ENCODE measurements at regions of chr19 and their contacts with region 1.

Region 1: DNA sequence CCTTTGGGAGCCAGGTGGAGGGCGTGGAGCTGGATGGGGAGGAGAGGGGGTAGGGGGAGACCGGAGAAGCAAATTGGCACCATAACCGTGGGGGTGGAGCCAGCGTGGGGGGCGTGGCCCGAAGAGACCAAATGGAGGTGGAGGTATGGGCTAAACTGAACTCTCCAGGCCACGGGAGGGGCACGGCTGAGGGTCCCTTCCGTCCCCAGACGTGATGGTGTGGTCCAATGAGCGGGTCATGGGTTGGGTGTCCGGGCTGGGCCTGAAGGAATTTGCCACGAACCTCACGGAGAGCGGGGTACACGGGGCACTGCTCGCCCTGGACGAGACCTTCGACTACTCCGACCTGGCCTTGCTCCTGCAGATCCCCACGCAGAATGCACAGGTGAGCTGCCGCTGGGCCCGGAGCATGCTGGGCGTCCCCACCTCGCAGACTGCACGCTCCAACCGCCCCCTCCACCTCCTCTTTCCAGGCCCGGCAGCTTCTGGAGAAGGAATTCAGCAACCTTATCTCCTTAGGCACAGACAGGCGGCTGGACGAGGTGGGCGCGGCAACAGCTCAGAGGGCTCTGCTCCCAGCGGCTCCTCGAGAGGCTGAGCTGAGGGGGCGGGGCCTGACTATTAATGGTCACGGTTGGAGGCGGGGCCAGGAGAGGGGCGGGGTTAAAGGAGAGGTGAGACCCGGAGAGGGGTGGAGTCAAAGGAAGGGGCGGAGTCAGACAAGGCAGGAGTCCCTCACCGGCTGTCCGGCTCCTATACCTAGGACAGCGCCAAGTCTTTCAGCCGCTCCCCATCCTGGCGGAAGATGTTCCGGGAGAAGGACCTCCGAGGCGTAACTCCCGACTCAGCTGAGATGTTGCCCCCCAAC is 6.2 kb downstream of the HRC start:
- DNase-seq: peak; percentile 49 to 64 (median 54)
- H3K4me3 ChIP-seq: peak overlapping the region in 2 of 3 experiments; percentile 59 to 79
- H3K4me3 Mint-ChIP-seq: peak overlapping the region; percentile 79 to 93
- H3K27ac ChIP-seq: no peak overlapping the region
- H3K27ac Mint-ChIP-seq: peak overlapping the region in 1 of 7 donors; percentile 63
- H3K4me1 ChIP-seq: peaks cover 39 to 53% of the 10 kb centered on the region in 2 donors
- H3K4me1 Mint-ChIP-seq: peaks cover 45% of the 10 kb centered on the region
- H3K27me3 ChIP-seq: peaks cover 13 to 54% of the 10 kb centered on the region in 2 donors
- H3K27me3 Mint-ChIP-seq: peaks cover 67 to 77% (median 70%) of the 10 kb centered on the region in 3 donors
- CTCF ChIP-seq: no peak

Region 2: DNA sequence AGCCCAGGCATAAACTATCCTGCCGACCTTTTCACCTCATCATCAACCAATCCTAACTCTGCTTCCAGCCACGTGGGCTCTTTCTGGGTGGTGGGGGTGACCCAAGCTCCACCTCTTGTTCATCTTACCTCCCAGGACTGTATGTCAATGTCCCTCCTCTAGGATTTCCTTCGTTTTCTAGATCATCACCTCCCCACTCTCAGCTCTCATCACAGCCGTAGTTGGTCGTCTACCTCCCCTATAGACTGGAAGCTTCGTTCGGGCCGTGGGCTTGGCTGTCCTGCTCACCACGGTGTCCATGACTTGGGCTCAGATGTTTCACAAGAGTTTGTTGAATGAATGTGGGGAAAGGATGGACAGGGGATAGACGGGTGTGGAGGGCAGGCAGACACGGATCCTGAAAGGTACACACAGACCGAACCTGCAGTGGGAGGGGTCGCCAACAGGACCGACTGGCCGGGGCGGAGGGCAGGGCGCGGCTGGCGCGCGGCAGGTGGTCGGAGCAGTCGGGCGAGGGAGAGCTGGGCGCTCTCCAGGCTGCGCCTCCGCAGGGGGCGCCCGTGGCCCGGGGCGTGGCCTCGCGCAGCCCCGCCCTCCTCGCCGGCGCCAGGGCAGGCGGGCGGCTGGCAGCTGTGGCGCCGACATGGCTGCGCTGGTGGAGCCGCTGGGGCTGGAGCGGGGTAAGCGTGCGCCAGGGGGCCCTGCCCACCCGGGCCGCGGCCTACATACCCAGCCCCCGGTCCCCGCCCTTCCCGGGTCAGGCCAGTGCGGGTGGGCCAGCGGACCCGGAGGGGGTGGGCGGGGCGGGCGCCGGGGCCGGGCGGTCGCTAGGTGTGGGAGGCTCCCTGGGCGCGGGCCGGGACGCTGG is 35.0 kb before region 1 on chr19 and contains the start of gene LIN7B:
- intact Hi-C with region 1: loop called in 1 of 2 experiments (anchors 5 kb)
- DNase-seq: peak; percentile 40 to 64 (median 61)
- H3K4me3 ChIP-seq: peak within 1 kb of the TSS; percentile 31 to 80 (median 55)
- H3K4me3 Mint-ChIP-seq: peak within 1 kb of the TSS; percentile 79 to 82
- H3K27ac ChIP-seq: no peak within 1 kb of the TSS
- H3K27ac Mint-ChIP-seq: peak within 1 kb of the TSS in 5 of 7 donors; percentile 38 to 65 (median 60)
- H3K4me1 ChIP-seq: peaks cover 35 to 45% of the 10 kb centered on the region in 2 donors
- H3K4me1 Mint-ChIP-seq: peaks cover 39% of the 10 kb centered on the region
- H3K27me3 ChIP-seq: no peaks in the 10 kb centered on the region
- H3K27me3 Mint-ChIP-seq: peaks cover 7 to 11% (median 10%) of the 10 kb centered on the region in 3 donors
- CTCF ChIP-seq: peak; percentile 76
- polyA plus RNA-seq, gene LIN7B: 4.1 to 9.2 (median 4.2) TPM

Region 3: DNA sequence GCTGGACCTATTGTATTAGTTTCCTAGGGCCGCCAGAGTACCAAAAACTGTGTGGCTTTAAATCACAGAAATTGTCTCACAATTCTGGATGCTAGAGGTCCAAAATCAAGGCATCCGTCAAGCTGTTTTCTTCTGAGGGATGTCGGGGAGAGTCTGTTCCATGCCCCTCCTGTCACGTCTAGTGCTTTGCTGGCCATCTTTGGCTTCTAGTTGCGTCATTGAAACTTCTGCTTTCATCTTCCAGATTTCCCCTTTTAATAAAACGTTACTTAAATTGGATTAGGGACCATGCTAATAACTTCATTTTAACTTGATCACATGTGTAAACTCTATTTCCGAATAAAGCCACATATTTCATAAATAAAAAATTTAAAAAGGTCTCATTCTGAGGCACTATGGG is 56.1 kb after region 1 on chr19:
- intact Hi-C with region 1: loop called in 1 of 2 experiments (anchors 5 kb)
- DNase-seq: peak; percentile 68 to 82 (median 76)
- H3K4me3 ChIP-seq: no peak overlapping the region
- H3K4me3 Mint-ChIP-seq: peak overlapping the region in 1 of 2 donors; percentile 35
- H3K27ac ChIP-seq: no peak overlapping the region
- H3K27ac Mint-ChIP-seq: peak overlapping the region in 6 of 7 donors; percentile 43 to 89 (median 76)
- H3K4me1 ChIP-seq: peaks cover 32 to 55% of the 10 kb centered on the region in 2 donors
- H3K4me1 Mint-ChIP-seq: peaks cover 42% of the 10 kb centered on the region
- H3K27me3 ChIP-seq: no peaks in the 10 kb centered on the region
- H3K27me3 Mint-ChIP-seq: peaks cover 0 to 6% (median 4%) of the 10 kb centered on the region in 3 donors
- CTCF ChIP-seq: no peak

Region 4: DNA sequence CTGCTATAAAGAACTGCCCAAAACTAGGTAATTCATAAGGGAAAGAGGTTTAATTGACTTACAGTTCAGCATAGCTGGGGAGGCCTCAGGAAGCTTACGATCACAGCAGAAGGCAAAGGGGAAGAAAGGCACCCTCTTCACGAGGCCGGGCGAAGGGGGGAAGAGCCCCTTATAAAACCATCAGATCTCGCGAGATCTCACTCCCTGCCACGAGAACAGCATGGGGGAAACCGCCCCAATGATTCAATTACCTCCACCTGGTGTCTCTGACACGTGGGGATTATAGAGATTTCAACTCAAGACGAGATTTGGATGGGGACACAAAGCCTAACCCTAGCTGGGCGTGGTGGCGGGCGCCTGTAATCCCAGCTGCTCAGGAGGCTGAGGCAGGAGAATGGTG is 133.2 kb after region 1 on chr19:
- intact Hi-C with region 1: no loop called
- DNase-seq: no peak
- H3K4me3 ChIP-seq: no peak overlapping the region
- H3K4me3 Mint-ChIP-seq: no peak overlapping the region
- H3K27ac ChIP-seq: no peak overlapping the region
- H3K27ac Mint-ChIP-seq: no peak overlapping the region
- H3K4me1 ChIP-seq: no peaks in the 10 kb centered on the region
- H3K4me1 Mint-ChIP-seq: no peaks in the 10 kb centered on the region
- H3K27me3 ChIP-seq: no peaks in the 10 kb centered on the region
- H3K27me3 Mint-ChIP-seq: peaks cover 2 to 10% (median 9%) of the 10 kb centered on the region in 3 donors
- CTCF ChIP-seq: no peak

Measured in CD14-positive monocyte (primary cell).